HEK293T (cell line): ENCODE measurements at regions of chr4 and their contacts with region 1.

Region 1: DNA sequence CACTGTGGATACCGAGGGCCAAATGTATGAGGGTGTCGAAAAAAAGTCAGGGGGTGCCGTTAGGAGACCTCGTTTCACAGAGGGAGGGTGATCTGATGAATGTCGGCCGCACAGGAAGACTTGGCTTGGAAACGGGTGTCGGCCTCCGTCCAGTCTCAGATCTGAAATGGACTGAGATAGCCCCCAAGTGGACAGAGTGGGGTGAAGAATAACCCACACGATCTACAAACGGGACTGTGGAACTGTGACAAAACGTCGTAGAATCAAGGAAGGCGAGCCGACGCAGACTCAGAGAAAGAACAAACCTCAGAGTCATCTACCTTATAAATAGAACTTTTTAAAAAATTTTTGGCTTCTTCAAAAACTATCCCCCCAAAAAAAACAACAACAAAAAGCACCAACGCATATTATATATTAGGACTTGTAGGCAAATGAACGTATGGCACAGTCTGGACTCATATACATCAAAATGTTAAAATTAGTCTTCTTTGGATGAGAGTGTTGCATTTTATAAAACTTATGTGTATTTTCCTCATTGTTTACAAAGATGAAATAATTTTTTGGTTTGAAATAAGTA is 63.8 kb upstream of the IRF2 start:
- DNase-seq: peak; percentile 38

Region 2: DNA sequence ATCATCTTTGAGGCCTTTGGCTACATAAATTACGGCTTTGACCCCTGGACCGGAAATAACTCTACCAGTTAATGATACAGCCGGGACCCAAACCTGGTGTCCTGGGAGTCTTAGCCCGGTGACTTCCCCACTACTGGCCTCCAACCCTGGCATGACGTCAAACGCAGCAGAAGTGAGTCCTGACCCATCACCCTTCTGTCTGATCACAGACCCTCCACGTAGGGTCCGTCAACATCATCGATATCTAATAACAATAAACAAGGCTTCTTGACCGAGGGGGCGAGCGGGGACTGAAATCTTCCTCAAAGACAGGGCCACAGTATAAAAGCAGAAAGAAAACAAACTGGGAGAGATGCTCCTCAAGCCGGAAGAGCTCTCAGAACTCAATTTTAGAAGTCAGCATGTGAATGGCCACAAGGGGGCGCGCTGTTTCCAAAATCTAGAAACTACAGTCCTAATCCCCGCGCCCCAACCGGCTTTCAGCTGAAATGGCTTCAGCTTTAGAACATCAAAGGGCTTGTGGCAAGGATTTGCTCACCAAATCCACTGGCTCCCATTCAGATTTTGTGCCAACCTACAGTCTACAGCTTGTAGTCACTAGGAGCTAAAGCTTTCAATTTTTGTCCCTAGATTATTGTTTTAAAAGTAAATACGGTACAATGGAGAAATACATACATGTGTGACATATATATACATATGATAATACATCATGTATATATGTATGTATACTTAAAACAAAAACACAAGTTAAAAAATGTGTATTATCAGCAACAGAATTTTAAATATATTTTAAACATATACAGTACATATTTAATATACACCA is 274.0 kb before region 1 on chr4:
- CTCF ChIA-PET with region 1: interaction called, 5 read pairs
- POLR2A ChIA-PET with region 1: interaction called, 30 read pairs
- DNase-seq: peak; percentile 63

Region 3: DNA sequence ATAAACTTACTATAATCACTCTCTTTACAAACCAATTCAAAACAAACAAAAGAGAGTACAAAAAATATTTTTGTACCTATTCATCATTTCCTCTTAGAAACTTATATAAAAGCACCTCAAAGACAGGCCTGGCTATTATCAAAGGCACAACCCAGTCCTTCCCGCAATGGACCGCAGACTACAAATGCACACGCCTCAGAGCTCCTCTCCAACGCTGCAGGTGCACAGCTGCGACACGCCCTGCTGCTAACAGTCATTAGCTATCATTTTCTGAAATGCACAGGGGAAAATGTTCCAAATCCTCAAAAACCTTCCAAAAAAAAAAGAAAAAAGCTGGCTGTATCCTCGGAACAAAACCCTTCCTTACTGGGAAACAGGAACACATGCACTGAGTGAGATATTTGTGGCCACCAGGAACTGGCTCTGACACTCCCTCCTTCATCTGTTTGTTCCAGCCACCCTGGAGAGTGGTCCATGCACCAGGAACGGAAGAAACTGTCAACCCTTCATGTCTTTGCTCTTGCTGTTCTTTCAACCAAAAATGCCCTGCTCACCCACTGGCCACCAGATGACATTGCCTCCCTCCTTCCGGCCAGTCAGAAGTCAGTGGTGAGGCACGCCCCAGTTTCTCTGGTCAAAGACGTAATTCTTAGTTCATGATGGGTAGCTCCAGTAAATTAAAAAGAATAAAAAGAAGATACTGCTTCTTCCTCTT is 80.4 kb before region 1 on chr4:
- CTCF ChIA-PET with region 1: no interaction called
- POLR2A ChIA-PET with region 1: no interaction called
- DNase-seq: no peak

Region 4: GRCh38 chr4:184474263-184475095 is 63.6 kb before region 1 on chr4 and contains the start of gene IRF2:
- CTCF ChIA-PET with region 1: no interaction called
- POLR2A ChIA-PET with region 1: interaction called, 42 read pairs
- DNase-seq: peak; percentile 80

Region 5: DNA sequence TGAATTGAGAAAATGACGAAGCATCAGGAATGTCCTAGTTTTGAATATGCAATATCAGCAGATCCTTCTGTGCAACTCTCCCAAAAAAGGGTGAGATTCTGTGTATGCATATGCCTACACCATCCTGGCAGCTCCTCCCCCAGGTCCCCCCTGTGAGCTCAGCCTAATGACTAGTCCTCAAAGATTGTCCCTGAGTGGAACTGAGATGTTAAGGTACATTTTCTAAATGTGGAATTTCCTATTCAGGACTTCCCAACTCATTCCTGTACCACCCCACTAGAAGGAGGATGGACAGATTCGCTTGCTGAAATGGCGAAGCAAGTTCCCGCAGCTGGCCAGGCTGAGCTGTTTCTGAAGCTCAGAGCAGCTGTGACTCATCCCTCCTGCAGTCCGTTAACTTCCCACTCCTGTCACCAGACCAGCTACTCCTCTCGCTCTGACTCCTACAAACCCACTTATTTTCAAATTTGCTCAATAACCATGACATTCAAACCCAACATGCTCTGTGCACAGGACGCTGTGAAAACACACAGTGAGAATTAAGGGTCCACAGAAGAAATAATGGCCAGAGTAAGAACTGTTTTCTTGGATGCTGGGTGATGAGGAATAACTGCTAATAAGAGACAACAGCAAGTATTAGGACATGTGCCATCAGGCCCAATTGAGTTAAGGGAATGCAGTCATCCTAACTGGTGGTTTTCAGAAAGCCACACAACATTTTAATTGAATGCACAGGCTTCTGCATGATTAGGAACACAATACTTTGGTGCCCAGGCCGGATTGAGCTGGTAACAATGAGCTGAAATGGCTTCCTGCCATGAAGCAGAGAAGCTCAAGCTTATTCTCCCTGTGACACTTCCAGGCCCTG is 23.8 kb before region 1 on chr4:
- CTCF ChIA-PET with region 1: no interaction called
- POLR2A ChIA-PET with region 1: interaction called, 11 read pairs
- DNase-seq: no peak

Region 6: GRCh38 chr4:184649026-184649970 is 111.2 kb after region 1 on chr4 and contains the starts of genes CASP3 and PRIMPOL:
- CTCF ChIA-PET with region 1: no interaction called
- POLR2A ChIA-PET with region 1: interaction called, 11 read pairs
- DNase-seq: peak; percentile 75